ENCODE measurements at regions of chr2 and their contacts with region 1.

Region 1: GRCh38 chr2:232611551-232612218 is 21.7 kb upstream of the EFHD1 start:
- DNase-seq: peak; percentile 96
- H3K4me3 Mint-ChIP-seq: no peak overlapping the region
- H3K27ac Mint-ChIP-seq: no peak overlapping the region
- H3K4me1 Mint-ChIP-seq: peaks cover 9% of the 10 kb centered on the region
- H3K27me3 Mint-ChIP-seq: no peaks in the 10 kb centered on the region
- CTCF ChIP-seq: peak; percentile 82

Region 2: DNA sequence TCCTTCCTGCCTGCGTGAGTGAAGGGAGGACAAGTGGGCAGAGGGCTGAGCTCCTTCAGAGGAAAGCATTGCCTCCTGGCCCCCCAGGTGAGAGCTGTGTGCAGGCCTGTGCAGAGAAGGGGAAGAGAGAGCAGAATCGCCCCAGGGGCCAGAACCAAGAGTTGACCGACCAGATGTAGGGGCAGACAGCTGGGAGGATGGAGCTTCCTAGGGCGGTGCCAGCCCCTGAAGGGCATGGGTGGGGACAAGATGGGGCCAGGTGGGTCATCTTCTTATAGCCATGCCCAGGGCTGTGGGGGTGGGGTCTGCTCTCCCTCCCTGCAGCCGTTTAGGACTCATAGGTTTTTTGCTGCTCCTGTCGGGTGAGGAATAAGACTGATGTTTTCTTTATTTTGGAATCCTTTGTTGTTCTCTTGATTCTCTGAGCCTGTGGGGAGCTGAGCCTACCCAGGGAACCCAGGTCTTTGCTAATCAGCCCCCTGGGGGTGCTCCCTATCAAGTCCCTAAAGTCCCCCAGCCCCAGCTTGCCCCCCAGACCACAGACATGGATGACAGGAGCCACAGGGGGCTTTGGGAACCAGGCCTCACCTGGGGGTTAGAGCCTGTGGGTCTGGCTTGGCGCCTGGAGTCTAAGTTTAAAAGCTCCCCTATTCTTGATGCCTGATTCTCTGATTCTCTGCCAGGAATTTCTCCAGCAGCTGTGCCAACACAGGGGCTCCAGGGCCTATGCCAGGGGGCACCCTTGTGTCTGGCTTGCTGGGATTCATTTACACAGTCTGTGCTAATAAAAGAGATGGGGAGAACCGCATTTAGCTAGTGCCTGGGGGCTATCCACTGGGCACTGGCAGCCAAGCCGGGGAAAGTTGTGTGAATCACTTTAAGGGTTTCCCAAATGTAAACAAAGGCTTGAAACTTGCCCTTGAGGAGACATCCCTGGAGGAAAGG is 12.4 kb after region 1 on chr2:
- CTCF ChIA-PET with region 1: interaction called, 22 read pairs
- POLR2A ChIA-PET with region 1: no interaction called
- intact Hi-C with region 1: no loop called
- DNase-seq: peak; percentile 81
- H3K4me3 Mint-ChIP-seq: no peak overlapping the region
- H3K27ac Mint-ChIP-seq: no peak overlapping the region
- H3K4me1 Mint-ChIP-seq: peaks cover 8% of the 10 kb centered on the region
- H3K27me3 Mint-ChIP-seq: no peaks in the 10 kb centered on the region
- CTCF ChIP-seq: no peak

Region 3: DNA sequence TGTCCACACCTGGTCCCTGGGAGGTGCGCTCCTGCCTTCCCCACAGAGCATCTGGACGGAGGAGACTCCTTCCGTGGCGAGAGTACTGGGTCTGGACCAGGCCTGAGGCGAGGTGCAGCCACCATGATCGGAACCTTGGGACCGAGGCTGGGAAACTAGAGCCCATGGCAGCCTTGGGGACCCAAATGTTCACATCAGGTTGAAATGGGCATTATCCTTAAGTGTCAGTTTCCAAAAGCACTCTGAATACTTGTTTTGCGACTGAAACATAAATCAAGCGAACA is 86.1 kb after region 1 on chr2:
- CTCF ChIA-PET with region 1: interaction called, 7 read pairs
- POLR2A ChIA-PET with region 1: interaction called, 3 read pairs
- intact Hi-C with region 1: loop called (anchors 2 kb)
- DNase-seq: no peak
- H3K4me3 Mint-ChIP-seq: peak overlapping the region; percentile 95
- H3K27ac Mint-ChIP-seq: peak overlapping the region; percentile 93
- H3K4me1 Mint-ChIP-seq: peaks cover 26% of the 10 kb centered on the region
- H3K27me3 Mint-ChIP-seq: no peaks in the 10 kb centered on the region
- CTCF ChIP-seq: no peak

Region 4: GRCh38 chr2:232761301-232761907 is 149.7 kb after region 1 on chr2:
- CTCF ChIA-PET with region 1: no interaction called
- POLR2A ChIA-PET with region 1: no interaction called
- intact Hi-C with region 1: loop called (anchors 1 kb)
- DNase-seq: peak; percentile 54
- H3K4me3 Mint-ChIP-seq: no peak overlapping the region
- H3K27ac Mint-ChIP-seq: no peak overlapping the region
- H3K4me1 Mint-ChIP-seq: no peaks in the 10 kb centered on the region
- H3K27me3 Mint-ChIP-seq: no peaks in the 10 kb centered on the region
- CTCF ChIP-seq: peak; percentile 38

Region 5: GRCh38 chr2:232854082-232854481 is 242.4 kb after region 1 on chr2:
- CTCF ChIA-PET with region 1: no interaction called
- POLR2A ChIA-PET with region 1: no interaction called
- intact Hi-C with region 1: loop called (anchors 5 kb)
- DNase-seq: peak; percentile 97
- H3K4me3 Mint-ChIP-seq: no peak overlapping the region
- H3K27ac Mint-ChIP-seq: no peak overlapping the region
- H3K4me1 Mint-ChIP-seq: peaks cover 28% of the 10 kb centered on the region
- H3K27me3 Mint-ChIP-seq: no peaks in the 10 kb centered on the region
- CTCF ChIP-seq: no peak

Measured in MCF 10A (cell line).